Transverse colon (tissue), 4 donors: ENCODE measurements at regions of chr13 and their contacts with region 1.

Region 1: GRCh38 chr13:32381539-32381938 is 46.4 kb downstream of the N4BP2L1 start:
- DNase-seq: no peak
- H3K4me3 ChIP-seq: no peak overlapping the region
- H3K27ac ChIP-seq: no peak overlapping the region
- H3K4me1 ChIP-seq: no peaks in the 10 kb centered on the region
- H3K27me3 ChIP-seq: no peaks in the 10 kb centered on the region
- CTCF ChIP-seq: peak; percentile 33 to 44 (median 37)
- EP300 ChIP-seq: no peak
- POLR2A ChIP-seq: no peak

Region 2: GRCh38 chr13:32125221-32125631 is 256.3 kb before region 1 on chr13:
- in situ Hi-C with region 1: no loop called
- intact Hi-C with region 1: no loop called
- DNase-seq: no peak
- H3K4me3 ChIP-seq: no peak overlapping the region
- H3K27ac ChIP-seq: peak overlapping the region in 2 of 4 donors; percentile 15 to 34
- H3K4me1 ChIP-seq: no peaks in the 10 kb centered on the region
- H3K27me3 ChIP-seq: no peaks in the 10 kb centered on the region
- CTCF ChIP-seq: no peak
- EP300 ChIP-seq: no peak
- POLR2A ChIP-seq: no peak

Region 3: DNA sequence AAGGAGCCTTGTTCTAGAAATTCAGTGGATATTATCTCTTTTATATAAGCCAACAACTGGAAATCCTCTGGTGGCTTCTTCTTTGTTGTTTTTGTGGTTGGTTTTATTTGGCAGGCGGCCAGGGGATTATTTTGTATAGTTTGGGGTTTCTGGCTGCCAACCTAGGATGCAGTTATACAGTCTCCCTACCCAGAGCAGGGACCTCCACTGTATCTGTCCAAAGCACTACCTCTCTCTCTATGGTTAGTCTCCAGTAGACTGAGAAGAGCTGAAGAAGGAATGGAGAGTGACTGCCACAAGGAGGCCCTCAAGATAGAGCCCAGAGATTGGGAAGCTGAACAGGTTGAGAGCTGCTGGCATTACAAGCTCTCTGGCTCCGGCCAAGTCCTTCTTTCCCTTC is 146.6 kb before region 1 on chr13:
- in situ Hi-C with region 1: no loop called
- intact Hi-C with region 1: no loop called
- DNase-seq: no peak
- H3K4me3 ChIP-seq: no peak overlapping the region
- H3K27ac ChIP-seq: no peak overlapping the region
- H3K4me1 ChIP-seq: no peaks in the 10 kb centered on the region
- H3K27me3 ChIP-seq: no peaks in the 10 kb centered on the region
- CTCF ChIP-seq: no peak
- EP300 ChIP-seq: no peak
- POLR2A ChIP-seq: no peak

Region 4: GRCh38 chr13:32555613-32556012 is 174.1 kb after region 1 on chr13:
- in situ Hi-C with region 1: loop called in 1 of 4 experiments (anchors 10 kb)
- intact Hi-C with region 1: no loop called
- DNase-seq: no peak
- H3K4me3 ChIP-seq: no peak overlapping the region
- H3K27ac ChIP-seq: no peak overlapping the region
- H3K4me1 ChIP-seq: no peaks in the 10 kb centered on the region
- H3K27me3 ChIP-seq: no peaks in the 10 kb centered on the region
- CTCF ChIP-seq: no peak
- EP300 ChIP-seq: no peak
- POLR2A ChIP-seq: no peak

Region 5: DNA sequence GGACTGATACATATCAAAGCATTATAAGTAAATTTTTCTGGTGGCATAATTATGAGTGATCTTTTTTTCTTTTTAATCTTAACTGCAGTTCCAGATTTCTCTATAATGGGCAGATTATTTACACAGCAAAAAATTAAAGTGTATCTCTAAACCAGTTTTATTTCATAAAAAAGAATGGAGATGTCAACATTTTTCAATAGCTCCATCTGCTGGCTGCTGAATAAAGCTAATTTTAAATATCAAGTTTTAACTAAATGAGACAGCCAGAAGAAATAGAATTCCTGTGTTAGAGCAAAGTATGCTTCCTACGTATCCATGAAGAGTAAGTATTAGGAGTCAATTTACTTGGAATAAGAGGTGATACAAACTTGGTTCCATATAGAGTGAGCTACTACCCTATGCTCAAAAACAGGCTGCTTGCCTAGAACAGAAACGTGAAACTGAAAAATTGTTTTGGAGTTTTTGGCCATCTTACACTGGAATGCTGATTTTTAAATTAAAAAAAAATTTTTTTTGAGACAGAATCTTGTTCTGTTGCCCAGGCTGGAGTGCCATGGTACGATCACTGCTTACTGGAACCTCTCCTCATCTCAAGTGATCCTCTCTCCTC is 199.7 kb after region 1 on chr13:
- in situ Hi-C with region 1: no loop called
- intact Hi-C with region 1: loop called (anchors 5 kb)
- DNase-seq: no peak
- H3K4me3 ChIP-seq: no peak overlapping the region
- H3K27ac ChIP-seq: no peak overlapping the region
- H3K4me1 ChIP-seq: peaks cover 0 to 7% (median 6%) of the 10 kb centered on the region in 4 donors
- H3K27me3 ChIP-seq: no peaks in the 10 kb centered on the region
- CTCF ChIP-seq: peak in 4 of 5 experiments; percentile 18 to 52 (median 44)
- EP300 ChIP-seq: no peak
- POLR2A ChIP-seq: no peak